PC-9 (cell line): ENCODE measurements at regions of chr2 and their contacts with region 1.

Region 1: GRCh38 chr2:241217320-241218031 is 29.0 kb downstream of the ANO7 start:
- DNase-seq: peak; percentile 63 to 86
- H3K4me3 ChIP-seq: peak overlapping the region; percentile 47; the same call in 1 of the 2 replicates
- H3K27ac ChIP-seq: no peak overlapping the region
- H3K4me1 ChIP-seq: peaks cover 11% of the 10 kb centered on the region
- H3K27me3 ChIP-seq: peaks cover 15% of the 10 kb centered on the region
- CTCF ChIP-seq: no peak

Region 2: DNA sequence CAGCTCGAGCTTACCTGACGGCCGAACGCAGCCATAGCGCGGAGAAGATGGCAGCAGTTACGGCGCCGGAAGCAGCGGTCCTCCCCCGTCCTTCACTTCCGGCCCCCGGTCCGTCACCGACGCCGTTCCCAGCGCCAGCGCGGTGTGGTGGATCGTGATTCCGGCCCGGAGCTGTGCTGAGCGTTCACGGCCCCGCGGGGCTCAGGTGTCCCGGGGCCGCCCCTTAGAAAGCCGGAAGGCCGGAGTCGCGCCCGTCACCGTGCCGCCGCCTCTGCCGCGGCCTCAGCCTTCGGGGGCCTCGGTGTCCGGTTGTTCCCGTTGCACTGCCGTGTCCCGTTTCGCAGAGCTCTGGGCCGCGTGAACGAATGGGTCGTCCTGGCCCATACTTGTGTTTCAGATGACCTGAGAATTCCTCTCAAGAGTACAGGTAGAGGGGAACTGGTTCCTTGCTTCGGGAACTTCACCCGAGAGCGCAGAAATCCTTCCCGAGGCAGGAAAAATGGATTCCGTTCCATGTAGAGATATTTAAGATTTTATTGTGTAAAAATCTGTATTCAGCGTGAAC is 115.2 kb before region 1 on chr2 and contains the start of gene MTERF4:
- CTCF ChIA-PET with region 1: no interaction called
- POLR2A ChIA-PET with region 1: no interaction called
- intact Hi-C with region 1: loop called (anchors 10 kb)
- DNase-seq: peak; percentile 84 to 96
- H3K4me3 ChIP-seq: peak within 1 kb of the TSS; percentile 83
- H3K27ac ChIP-seq: peak within 1 kb of the TSS; percentile 66
- H3K4me1 ChIP-seq: peaks cover 10% of the 10 kb centered on the region
- H3K27me3 ChIP-seq: no peaks in the 10 kb centered on the region
- CTCF ChIP-seq: no peak
- total RNA-seq, gene MTERF4: 38.6 and 42.8 TPM in 2 replicates

Region 3: DNA sequence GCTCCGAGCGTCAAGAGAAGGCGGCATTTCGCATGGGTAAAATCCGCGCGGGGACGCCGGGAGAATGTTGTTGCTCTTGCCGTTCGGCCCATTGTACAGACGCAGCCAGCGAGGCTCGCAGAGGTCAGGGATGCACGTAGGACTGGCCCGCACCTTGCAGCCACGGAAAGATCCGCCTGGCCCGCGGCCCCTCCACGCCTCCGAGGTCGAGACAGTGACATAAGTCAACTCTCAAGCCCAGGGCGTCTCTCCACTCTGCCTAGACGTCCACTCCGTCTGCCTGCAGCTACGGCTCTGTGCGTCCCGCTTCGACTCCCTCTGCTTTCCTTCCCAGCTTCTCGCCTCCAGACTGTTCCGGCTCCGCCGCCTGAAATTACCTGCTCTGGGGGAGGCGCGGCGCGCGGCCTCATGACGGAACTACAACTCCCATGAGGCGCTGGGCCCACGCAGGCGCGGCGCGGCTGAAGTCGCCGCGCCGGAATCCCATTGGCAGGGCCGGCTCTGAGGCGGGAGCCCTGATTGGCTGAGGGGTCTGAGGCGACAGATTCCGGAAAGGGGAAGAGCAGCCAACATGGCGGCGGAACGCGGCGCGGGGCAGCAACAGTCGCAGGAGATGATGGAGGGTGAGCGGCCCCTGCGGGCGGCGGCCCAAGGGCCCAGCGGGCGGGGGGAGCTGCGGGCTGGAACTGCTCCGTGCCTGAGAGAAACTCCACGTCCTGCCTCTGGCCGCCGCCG is 67.4 kb before region 1 on chr2 and contains the start of gene PPP1R7:
- CTCF ChIA-PET with region 1: no interaction called
- POLR2A ChIA-PET with region 1: no interaction called
- intact Hi-C with region 1: loop called (anchors 1 kb)
- DNase-seq: peak; percentile 94 to 97
- H3K4me3 ChIP-seq: peak within 1 kb of the TSS; percentile 76
- H3K27ac ChIP-seq: no peak within 1 kb of the TSS
- H3K4me1 ChIP-seq: peaks cover 17% of the 10 kb centered on the region
- H3K27me3 ChIP-seq: no peaks in the 10 kb centered on the region
- CTCF ChIP-seq: no peak
- total RNA-seq, gene PPP1R7: 113 and 143 TPM in 2 replicates

Region 4: DNA sequence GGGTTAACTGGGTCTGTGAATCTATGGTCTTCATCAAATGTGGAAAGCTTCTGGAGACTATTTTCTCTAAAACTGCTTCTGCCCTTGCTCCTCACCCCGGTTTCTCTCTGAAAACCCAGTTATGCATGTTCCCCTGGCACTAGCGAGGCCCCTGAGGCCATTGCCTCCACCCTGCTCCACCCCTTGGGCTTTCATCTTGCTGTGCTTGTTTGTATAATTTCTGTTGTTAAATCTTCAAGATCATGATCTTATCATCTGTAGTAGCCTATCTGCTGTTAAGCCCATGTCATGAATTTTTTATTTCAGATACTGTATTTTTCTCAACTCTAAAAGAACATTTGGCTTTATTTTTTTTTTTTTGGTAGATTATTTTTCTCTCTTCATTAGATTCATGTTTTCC is 43.9 kb before region 1 on chr2:
- CTCF ChIA-PET with region 1: no interaction called
- POLR2A ChIA-PET with region 1: interaction called, 15 read pairs
- intact Hi-C with region 1: no loop called
- DNase-seq: no peak
- H3K4me3 ChIP-seq: no peak overlapping the region
- H3K27ac ChIP-seq: no peak overlapping the region
- H3K4me1 ChIP-seq: no peaks in the 10 kb centered on the region
- H3K27me3 ChIP-seq: no peaks in the 10 kb centered on the region
- CTCF ChIP-seq: no peak

Region 5: GRCh38 chr2:241649927-241650326 is 432.5 kb after region 1 on chr2:
- CTCF ChIA-PET with region 1: no interaction called
- POLR2A ChIA-PET with region 1: interaction called, 10 read pairs
- intact Hi-C with region 1: no loop called
- DNase-seq: no peak
- H3K4me3 ChIP-seq: no peak overlapping the region
- H3K27ac ChIP-seq: no peak overlapping the region
- H3K4me1 ChIP-seq: no peaks in the 10 kb centered on the region
- H3K27me3 ChIP-seq: no peaks in the 10 kb centered on the region
- CTCF ChIP-seq: no peak